Activated CD4-positive, alpha-beta memory T cell treated with anti-CD3 and anti-CD28 coated beads for 36 hours (primary cell): ENCODE measurements at regions of chr10 and their contacts with region 1.

Region 1: DNA sequence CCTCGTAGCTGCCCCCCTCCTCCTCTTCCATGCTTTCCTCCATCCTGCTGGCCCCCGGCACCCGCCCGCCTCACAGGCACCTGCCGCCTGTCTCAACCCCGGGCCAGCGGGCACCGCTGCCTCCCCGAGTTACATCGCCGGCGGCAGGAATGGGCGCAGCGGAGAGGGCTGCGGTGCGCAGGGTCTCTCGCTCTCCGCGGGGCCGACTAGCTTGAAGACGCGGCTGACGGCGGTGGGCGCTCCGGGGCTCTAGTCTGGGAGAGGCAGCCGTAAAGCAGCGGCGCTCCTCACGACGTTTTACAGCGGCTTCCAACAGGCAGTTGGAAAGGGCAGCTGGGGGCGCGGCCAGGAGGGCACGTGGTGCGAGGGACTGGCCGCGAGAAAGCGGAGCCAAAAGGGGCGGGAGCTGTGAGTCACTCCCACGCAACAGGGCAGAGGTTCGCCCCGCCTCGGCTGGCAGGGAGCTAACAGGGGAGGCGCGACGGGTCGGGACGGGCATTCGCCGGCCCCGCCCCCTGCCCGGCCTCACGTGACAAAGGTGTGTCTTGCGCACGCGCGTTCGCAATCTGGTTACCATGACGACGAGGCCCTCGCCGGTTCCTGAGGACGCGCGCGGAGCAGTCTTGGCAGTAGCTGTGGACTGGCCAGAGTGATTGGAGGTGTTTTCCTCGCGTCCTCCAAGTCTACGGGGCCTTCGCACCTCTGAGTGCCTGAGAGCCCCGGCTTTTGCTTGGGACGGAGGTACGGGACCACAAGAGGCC is at the start of gene CACUL1:
- DNase-seq: peak; percentile 100
- H3K4me3 Mint-ChIP-seq: peak within 1 kb of the TSS; percentile 91
- H3K27ac Mint-ChIP-seq: peak within 1 kb of the TSS; percentile 83
- H3K4me1 Mint-ChIP-seq: peaks cover 34% of the 10 kb centered on the region
- H3K27me3 Mint-ChIP-seq: peaks cover 6% of the 10 kb centered on the region
- total RNA-seq, gene CACUL1: 24.0 to 24.4 TPM

Region 2: DNA sequence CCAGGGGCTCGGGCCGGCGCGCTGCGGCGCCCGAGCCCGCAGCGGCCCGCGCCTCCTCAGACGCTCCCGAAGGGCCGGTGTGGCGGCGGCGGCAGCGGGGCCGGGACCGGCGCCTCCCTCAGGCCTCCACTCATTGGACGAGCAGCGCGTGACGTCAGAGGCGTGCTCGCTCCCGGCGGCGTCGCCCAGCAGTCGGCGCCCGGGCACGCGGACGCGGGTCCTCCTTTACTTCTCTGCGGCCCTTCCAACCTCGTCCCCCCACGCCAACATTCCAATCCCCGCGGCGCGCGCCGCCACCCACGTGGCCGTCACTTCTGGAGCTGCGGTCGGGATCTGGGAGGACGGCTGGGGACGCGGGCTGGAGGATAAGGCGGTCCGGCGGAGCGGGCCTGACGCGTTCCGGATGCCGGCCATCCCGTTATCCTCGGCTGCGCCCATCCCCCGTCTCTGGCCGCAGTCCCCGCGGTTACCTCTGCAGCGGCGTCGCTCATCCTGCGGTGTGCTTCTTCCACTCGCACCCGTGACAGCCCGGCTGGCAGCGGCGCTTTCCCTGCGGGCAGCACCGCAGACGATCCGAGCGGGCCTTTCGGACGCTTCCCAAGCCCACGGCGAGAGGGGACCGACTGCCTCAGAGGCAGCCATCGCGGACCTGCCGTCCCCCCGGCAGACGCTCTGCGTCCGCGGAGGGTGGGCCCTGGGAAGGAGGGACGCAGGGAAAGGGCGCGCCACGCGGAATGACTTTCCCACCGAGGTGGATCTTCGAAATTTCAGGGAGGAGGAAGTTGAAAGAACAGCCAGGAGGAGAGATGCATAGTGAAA is 1379.3 kb before region 1 on chr10 and contains the start of gene PDZD8:
- CTCF ChIA-PET with region 1: no interaction called
- POLR2A ChIA-PET with region 1: no interaction called
- intact Hi-C with region 1: loop called (anchors 10 kb)
- DNase-seq: peak; percentile 91
- H3K4me3 Mint-ChIP-seq: peak within 1 kb of the TSS; percentile 92
- H3K27ac Mint-ChIP-seq: peak within 1 kb of the TSS; percentile 69
- H3K4me1 Mint-ChIP-seq: peaks cover 20% of the 10 kb centered on the region
- H3K27me3 Mint-ChIP-seq: peaks cover 12% of the 10 kb centered on the region
- total RNA-seq, gene PDZD8: 14.3 to 16.2 TPM

Region 3: DNA sequence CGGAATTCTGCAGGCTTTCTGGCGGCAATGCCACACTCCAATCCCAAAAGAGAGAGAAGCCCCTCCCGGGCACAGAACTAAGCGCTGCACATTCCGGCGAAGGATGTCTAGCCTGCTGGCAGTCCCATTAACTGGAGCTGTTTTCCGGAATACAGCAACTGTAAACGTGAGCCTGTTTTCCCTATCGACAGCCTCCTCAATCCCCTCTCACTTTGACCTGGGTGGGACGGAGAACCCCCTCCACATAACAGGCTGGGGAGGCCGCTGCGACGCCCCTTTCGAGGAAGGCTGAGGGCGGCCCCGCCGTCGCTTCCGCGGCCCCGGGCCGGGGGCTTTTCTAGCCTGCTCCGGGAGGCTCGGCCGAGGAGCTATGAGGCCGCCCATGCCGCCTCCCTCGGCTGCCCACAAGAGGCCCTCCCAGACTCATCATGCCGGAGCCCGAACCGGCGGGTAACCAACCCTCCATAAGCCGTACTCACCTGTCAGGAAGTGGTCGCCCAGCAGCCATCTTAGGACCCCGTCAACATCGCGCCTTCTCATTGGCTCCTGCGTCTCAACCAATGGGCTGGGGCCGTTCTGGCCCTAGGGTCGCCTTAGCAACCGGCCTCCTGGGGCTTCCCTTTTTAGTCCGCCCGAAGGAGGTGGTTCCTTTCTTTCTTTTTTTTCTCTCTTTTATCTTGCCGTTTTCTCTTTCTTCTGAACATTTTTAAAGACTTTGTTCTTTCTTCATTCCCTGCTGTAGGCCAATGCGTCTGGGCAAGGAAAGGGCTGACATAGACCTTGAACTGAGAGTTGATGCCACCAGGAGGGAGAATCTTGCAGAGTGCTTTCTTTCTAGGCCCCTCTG is 412.9 kb before region 1 on chr10 and contains the start of gene FAM204A:
- CTCF ChIA-PET with region 1: no interaction called
- POLR2A ChIA-PET with region 1: no interaction called
- intact Hi-C with region 1: loop called (anchors 1 kb)
- DNase-seq: peak; percentile 98
- H3K4me3 Mint-ChIP-seq: peak within 1 kb of the TSS; percentile 92
- H3K27ac Mint-ChIP-seq: peak within 1 kb of the TSS; percentile 87
- H3K4me1 Mint-ChIP-seq: peaks cover 42% of the 10 kb centered on the region
- H3K27me3 Mint-ChIP-seq: no peaks in the 10 kb centered on the region
- total RNA-seq, gene FAM204A: 63.5 to 64.8 TPM

Region 4: GRCh38 chr10:118698421-118698820 is 56.5 kb before region 1 on chr10:
- CTCF ChIA-PET with region 1: no interaction called
- POLR2A ChIA-PET with region 1: interaction called, 4 read pairs
- intact Hi-C with region 1: loop called (anchors 1 kb)
- DNase-seq: peak; percentile 91
- H3K4me3 Mint-ChIP-seq: peak overlapping the region; percentile 33
- H3K27ac Mint-ChIP-seq: peak overlapping the region; percentile 40
- H3K4me1 Mint-ChIP-seq: peaks cover 21% of the 10 kb centered on the region
- H3K27me3 Mint-ChIP-seq: no peaks in the 10 kb centered on the region

Region 5: DNA sequence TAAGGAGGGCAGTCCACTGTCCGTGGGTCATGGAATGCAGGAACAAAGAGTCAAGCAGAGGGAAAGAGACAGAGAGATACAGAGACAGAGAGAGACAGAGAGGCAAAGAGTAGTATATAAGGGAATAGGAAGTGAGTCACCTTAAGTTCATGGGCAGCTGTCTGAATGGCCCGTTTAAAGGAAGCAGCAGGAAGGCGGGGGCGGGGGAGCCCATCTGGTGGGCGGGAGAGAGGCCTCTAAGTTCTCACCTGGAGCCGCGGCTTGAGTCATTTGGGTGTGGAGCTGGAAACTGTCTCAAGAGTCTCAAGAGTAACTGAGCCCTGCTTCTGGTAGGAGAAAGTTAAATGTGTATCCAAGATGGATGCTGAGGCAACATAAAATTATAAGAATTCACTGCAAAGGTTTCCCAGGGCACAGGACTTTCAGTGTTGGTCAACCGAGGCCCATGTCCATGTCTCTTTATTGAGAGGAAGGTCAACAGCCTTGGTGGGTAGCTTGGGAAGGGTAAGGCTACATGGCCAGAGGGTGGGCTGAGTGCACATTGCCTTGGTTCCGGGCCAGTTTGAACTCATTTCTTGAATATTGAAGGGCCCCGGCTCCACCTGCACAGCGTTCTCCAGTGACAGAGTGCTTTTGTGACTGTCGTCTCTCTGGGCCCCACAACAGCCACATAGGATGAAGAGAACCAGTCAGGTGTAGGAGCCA is 85.3 kb after region 1 on chr10:
- CTCF ChIA-PET with region 1: no interaction called
- POLR2A ChIA-PET with region 1: interaction called, 3 read pairs
- intact Hi-C with region 1: loop called (anchors 1 kb)
- DNase-seq: peak; percentile 93
- H3K4me3 Mint-ChIP-seq: no peak overlapping the region
- H3K27ac Mint-ChIP-seq: peak overlapping the region; percentile 14
- H3K4me1 Mint-ChIP-seq: peaks cover 13% of the 10 kb centered on the region
- H3K27me3 Mint-ChIP-seq: no peaks in the 10 kb centered on the region

Region 6: GRCh38 chr10:118922226-118922625 is 167.3 kb after region 1 on chr10:
- CTCF ChIA-PET with region 1: no interaction called
- POLR2A ChIA-PET with region 1: no interaction called
- intact Hi-C with region 1: no loop called
- DNase-seq: no peak
- H3K4me3 Mint-ChIP-seq: no peak overlapping the region
- H3K27ac Mint-ChIP-seq: no peak overlapping the region
- H3K4me1 Mint-ChIP-seq: no peaks in the 10 kb centered on the region
- H3K27me3 Mint-ChIP-seq: peaks cover 21% of the 10 kb centered on the region

Region 7: GRCh38 chr10:119080521-119081260 is 325.8 kb after region 1 on chr10 and contains the start of gene EIF3A:
- CTCF ChIA-PET with region 1: no interaction called
- POLR2A ChIA-PET with region 1: interaction called, 4 read pairs
- intact Hi-C with region 1: loop called (anchors 1 kb)
- DNase-seq: peak; percentile 95
- H3K4me3 Mint-ChIP-seq: peak within 1 kb of the TSS; percentile 92
- H3K27ac Mint-ChIP-seq: peak within 1 kb of the TSS; percentile 96
- H3K4me1 Mint-ChIP-seq: peaks cover 22% of the 10 kb centered on the region
- H3K27me3 Mint-ChIP-seq: no peaks in the 10 kb centered on the region
- total RNA-seq, gene EIF3A: 143 to 148 TPM